Common myeloid progenitor, CD34-positive (primary cell): ENCODE measurements at regions of chr19 and their contacts with region 1.

Region 1: DNA sequence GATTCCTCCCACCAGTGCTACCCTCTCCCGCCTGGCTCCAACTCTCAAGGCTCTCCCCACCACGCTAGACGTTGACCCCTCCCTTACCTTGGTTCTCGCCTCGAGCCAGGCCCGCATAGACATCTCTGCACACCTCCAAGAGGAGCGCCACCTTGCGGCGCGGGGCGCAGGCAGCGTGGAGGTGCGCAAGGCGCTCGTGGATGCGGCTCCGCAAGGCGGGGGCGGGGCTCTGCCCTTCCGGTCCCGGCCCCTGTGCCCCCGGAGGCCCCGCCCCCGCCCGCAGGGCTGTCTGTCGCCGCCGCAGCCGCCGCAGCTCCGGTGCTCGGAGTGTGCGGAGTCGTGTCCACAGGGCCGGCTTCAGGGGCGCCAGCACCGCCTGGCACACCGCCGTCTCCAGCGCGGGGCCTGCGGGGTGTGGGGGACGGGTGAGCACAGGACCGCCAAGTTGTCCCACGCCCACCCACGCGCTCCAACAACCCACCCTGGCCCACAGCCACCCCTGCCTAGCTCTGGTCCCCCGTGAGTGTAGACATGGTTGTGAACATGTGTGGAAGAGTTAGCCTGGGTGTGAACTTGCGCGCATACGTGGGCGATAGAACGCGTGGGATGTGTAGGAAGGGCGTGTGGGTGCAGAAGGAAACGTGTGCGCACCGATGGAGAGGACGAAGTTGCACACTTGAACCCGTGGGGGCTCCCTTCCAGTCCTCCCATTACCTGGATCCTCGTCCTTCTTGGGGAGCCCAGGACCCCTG is 8.0 kb downstream of the RINL start:
- DNase-seq: peak; percentile 90 to 91 (median 91)
- H3K4me3 ChIP-seq: peak overlapping the region; percentile 1 to 82 (median 61)
- H3K27ac ChIP-seq: no peak overlapping the region
- H3K4me1 ChIP-seq: peaks cover 0 to 34% (median 31%) of the 10 kb centered on the region in 4 experiments
- H3K27me3 ChIP-seq: no peaks in the 10 kb centered on the region

Region 2: DNA sequence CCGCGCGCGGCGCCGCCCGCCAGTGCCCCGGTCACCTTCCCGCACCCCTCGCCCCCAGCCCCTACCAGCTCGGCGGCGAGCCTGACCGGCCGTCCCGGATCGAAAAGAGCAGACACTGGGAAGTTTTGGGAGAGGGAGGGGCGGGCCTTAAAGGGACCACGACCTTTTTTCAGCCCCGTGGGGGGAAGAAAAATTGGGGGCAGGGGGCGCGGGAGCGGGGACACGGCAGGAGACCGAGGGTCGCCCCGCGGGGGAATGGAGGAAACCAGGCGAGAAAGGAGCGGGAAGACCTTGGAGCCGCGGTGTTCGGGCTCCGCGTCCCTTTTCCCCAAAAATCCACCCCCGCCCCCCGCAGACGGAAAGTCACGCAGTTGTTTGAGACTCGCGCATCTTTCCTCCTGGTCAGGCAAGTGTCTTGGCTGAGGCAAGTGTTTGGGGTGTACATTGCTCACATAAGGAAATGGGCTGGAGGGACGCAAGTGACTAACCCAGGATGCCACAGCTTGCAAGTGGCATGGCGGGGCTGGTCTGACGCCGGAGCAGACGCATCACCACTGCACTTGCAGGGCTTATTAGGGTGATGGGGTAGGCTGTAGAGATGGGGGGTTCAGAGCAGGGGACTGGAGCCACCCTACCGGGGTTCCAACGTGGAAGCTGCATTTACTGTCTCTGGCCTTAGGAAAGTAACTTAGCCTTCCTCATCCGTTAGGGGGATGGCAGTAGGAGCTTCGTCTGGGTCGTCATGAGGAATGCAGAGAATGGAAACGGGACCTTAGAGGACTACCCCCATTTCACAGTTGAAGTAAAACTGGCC is 17.6 kb before region 1 on chr19:
- CTCF ChIA-PET with region 1: interaction called, 15 read pairs
- POLR2A ChIA-PET with region 1: interaction called, 6 read pairs
- DNase-seq: peak in 2 of 3 donors; percentile 74 to 77
- H3K4me3 ChIP-seq: peak overlapping the region; percentile 39 to 96 (median 84)
- H3K27ac ChIP-seq: peak overlapping the region; percentile 33 to 86
- H3K4me1 ChIP-seq: peaks cover 6 to 46% (median 43%) of the 10 kb centered on the region in 4 experiments
- H3K27me3 ChIP-seq: no peaks in the 10 kb centered on the region

Region 3: DNA sequence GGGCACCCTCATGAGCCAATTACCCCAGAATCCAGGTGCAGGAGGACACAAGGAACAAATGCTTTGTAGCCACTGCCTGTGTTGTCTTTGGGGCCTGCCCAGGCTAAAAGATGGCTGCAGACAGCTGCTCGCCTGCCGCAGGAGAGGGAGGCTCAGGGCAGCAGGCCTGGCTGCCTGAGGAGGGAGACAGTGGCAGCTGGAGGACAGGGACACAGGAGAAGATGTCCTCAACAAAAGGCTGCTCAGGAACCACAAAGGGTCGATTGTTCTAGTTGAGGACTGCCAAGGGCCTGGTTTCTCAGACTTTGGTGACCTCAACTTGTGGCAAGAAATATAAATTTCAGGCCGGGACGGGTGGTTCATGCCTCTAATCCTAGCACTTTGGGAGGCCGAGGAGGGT is 21.7 kb after region 1 on chr19:
- CTCF ChIA-PET with region 1: interaction called, 20 read pairs
- POLR2A ChIA-PET with region 1: no interaction called
- DNase-seq: no peak
- H3K4me3 ChIP-seq: no peak overlapping the region
- H3K27ac ChIP-seq: no peak overlapping the region
- H3K4me1 ChIP-seq: peaks cover 0 to 10% (median 9%) of the 10 kb centered on the region in 4 experiments
- H3K27me3 ChIP-seq: no peaks in the 10 kb centered on the region

Region 4: GRCh38 chr19:38917516-38918491 is 47.8 kb after region 1 on chr19:
- CTCF ChIA-PET with region 1: no interaction called
- POLR2A ChIA-PET with region 1: no interaction called
- DNase-seq: no peak
- H3K4me3 ChIP-seq: no peak overlapping the region
- H3K27ac ChIP-seq: no peak overlapping the region
- H3K4me1 ChIP-seq: peaks cover 0 to 3% (median 0%) of the 10 kb centered on the region in 4 experiments
- H3K27me3 ChIP-seq: no peaks in the 10 kb centered on the region

Region 5: GRCh38 chr19:38989066-38989605 is 119.1 kb after region 1 on chr19:
- CTCF ChIA-PET with region 1: no interaction called
- POLR2A ChIA-PET with region 1: no interaction called
- DNase-seq: no peak
- H3K4me3 ChIP-seq: no peak overlapping the region
- H3K27ac ChIP-seq: no peak overlapping the region
- H3K4me1 ChIP-seq: no peaks in the 10 kb centered on the region
- H3K27me3 ChIP-seq: peaks cover 0 to 2% (median 0%) of the 10 kb centered on the region in 5 experiments